ENCODE measurements at regions of chr5 and their contacts with region 1.

Region 1: GRCh38 chr5:175534070-175534932 is 55.9 kb downstream of the SFXN1 start:
- DNase-seq: peak; percentile 94
- ATAC-seq: peak; percentile 95
- H3K4me3 Mint-ChIP-seq: peak overlapping the region; percentile 60
- H3K27ac Mint-ChIP-seq: peak overlapping the region; percentile 83
- H3K4me1 Mint-ChIP-seq: peaks cover 46% of the 10 kb centered on the region
- H3K27me3 Mint-ChIP-seq: no peaks in the 10 kb centered on the region

Region 2: DNA sequence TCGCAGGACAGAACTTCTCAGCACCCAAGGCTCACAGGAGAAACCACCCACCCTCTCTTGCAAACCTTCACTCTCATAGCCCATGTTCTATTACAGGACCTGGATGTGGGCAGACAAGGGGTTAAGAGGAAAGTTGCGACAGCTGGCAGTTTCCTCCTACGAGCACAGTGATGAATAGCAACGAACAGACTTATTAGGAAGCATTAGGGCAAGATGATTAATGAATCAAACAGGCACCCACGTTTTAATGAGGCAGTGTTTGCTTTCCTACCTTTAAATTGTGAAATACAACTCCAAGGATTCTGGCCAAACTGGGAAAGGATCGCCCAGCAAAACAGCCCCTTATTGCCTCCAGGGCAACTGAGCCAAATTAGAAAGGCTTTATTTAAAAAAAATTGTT is 429.6 kb before region 1 on chr5:
- CTCF ChIA-PET with region 1: no interaction called
- POLR2A ChIA-PET with region 1: no interaction called
- intact Hi-C with region 1: no loop called
- DNase-seq: no peak
- ATAC-seq: no peak
- H3K4me3 Mint-ChIP-seq: no peak overlapping the region
- H3K27ac Mint-ChIP-seq: no peak overlapping the region
- H3K4me1 Mint-ChIP-seq: no peaks in the 10 kb centered on the region
- H3K27me3 Mint-ChIP-seq: peaks cover 19% of the 10 kb centered on the region

Region 3: DNA sequence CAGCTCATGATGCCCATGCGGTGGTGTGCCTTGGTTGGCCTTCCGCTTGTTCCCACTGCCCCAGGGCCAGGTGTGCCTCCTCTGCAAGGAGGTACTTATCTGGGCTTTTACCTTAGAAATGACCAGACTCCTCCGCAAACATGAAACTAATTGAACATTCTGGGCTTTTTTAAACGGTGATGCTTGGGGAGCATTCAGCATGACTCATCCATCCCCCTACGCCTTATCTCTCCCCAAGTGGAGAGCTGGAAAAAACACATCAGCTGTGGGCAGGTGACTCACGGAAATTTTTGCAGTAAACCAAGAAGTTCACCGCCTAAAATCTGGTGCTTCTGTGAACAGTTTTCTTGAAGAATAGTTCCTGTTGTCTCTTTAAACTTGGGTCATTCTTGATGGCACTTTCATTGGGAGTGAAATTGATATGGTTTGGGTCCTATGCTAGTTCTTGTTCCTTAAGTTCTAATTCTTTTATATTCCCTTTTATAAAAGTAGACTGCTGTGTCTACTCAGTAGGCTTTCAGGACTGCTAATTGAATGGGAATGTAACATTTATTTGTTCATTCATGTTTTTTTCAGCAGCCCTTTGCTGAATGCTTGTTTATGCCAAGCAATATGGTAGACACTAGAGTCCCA is 16.4 kb before region 1 on chr5:
- CTCF ChIA-PET with region 1: interaction called, 48 read pairs
- POLR2A ChIA-PET with region 1: interaction called, 14 read pairs
- intact Hi-C with region 1: no loop called
- DNase-seq: peak; percentile 92
- ATAC-seq: peak; percentile 55
- H3K4me3 Mint-ChIP-seq: peak overlapping the region; percentile 54
- H3K27ac Mint-ChIP-seq: peak overlapping the region; percentile 98
- H3K4me1 Mint-ChIP-seq: peaks cover 95% of the 10 kb centered on the region
- H3K27me3 Mint-ChIP-seq: no peaks in the 10 kb centered on the region

Region 4: DNA sequence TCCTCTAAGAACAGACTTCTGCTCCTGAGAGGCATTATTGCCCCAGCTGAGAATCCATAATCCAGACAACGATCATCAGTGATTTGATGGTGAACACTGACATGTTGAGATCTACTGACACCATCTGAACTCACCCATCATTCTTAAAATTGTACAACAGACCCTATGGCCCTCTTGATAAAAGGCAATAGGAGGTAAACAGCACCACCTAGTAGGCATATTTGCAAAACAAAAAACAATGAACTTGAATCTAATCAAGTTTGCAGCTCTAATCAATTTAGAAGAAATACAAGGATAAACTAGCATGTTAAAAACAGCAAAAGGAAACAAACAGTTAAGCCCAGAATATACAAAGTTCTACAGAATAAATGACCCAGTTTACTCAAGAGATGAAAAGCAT is 33.7 kb after region 1 on chr5:
- CTCF ChIA-PET with region 1: interaction called, 10 read pairs
- POLR2A ChIA-PET with region 1: no interaction called
- intact Hi-C with region 1: loop called (anchors 1 to 5 kb)
- DNase-seq: no peak
- ATAC-seq: no peak
- H3K4me3 Mint-ChIP-seq: no peak overlapping the region
- H3K27ac Mint-ChIP-seq: no peak overlapping the region
- H3K4me1 Mint-ChIP-seq: peaks cover 11% of the 10 kb centered on the region
- H3K27me3 Mint-ChIP-seq: no peaks in the 10 kb centered on the region

Region 5: DNA sequence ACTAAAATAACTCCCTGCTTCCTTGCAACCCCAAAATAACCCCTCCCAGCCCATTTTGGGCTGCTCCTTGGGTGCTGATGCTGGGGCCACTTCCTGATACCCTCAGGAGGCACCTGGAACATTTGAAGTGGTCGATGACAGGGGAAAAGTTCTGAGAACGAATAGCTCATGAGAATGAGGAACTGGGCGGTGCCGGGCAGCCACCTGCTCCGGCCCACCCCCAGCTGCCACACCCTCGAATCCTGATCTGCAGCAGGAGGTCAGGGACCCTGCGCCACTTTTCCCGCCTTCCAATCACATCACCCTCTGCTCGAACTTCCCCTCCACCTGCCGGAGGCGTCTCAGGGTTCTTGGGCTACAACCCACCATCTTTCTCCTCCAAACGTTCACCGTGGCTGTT is 143.3 kb after region 1 on chr5:
- CTCF ChIA-PET with region 1: interaction called, 13 read pairs
- POLR2A ChIA-PET with region 1: no interaction called
- intact Hi-C with region 1: no loop called
- DNase-seq: no peak
- ATAC-seq: no peak
- H3K4me3 Mint-ChIP-seq: no peak overlapping the region
- H3K27ac Mint-ChIP-seq: peak overlapping the region; percentile 42
- H3K4me1 Mint-ChIP-seq: peaks cover 48% of the 10 kb centered on the region
- H3K27me3 Mint-ChIP-seq: no peaks in the 10 kb centered on the region

Region 6: DNA sequence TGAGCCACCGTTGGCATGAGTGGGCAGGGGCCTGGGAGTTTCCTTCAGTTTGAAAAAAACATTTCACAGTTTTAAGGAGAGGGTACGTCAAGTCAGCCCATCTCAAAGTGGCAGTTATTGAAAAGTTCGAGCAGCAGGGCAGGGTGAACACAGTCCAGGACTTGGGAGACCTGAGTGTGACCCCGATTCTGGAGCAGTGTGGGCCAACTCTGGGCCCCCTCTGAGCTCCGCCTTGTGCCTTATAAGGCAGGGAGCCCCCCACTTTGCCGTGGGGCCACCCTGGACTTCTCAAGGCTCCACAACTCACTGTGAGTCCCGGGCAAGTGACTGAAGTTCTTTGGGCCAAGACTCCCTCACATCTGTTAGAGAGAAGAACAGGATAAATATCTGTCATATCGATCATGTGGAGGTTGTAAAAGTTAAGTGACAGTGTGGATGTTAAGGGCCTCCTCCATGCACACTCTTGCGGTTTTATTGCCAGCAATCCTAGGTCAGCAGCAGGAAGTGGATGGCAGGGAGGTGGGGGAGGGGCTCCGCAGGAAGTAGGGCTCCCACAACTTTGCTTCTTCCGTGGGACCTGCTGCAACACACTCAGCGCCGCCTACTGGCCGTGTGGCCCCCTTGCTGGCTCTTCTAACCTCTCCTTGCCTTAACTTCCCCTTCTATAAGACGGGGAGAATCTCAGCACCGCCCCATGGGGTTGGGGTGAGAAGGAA is 162.0 kb after region 1 on chr5:
- CTCF ChIA-PET with region 1: interaction called, 100 read pairs
- POLR2A ChIA-PET with region 1: no interaction called
- intact Hi-C with region 1: loop called (anchors 1 kb)
- DNase-seq: peak; percentile 94
- ATAC-seq: peak; percentile 90
- H3K4me3 Mint-ChIP-seq: peak overlapping the region; percentile 43
- H3K27ac Mint-ChIP-seq: peak overlapping the region; percentile 91
- H3K4me1 Mint-ChIP-seq: peaks cover 24% of the 10 kb centered on the region
- H3K27me3 Mint-ChIP-seq: no peaks in the 10 kb centered on the region

Region 7: DNA sequence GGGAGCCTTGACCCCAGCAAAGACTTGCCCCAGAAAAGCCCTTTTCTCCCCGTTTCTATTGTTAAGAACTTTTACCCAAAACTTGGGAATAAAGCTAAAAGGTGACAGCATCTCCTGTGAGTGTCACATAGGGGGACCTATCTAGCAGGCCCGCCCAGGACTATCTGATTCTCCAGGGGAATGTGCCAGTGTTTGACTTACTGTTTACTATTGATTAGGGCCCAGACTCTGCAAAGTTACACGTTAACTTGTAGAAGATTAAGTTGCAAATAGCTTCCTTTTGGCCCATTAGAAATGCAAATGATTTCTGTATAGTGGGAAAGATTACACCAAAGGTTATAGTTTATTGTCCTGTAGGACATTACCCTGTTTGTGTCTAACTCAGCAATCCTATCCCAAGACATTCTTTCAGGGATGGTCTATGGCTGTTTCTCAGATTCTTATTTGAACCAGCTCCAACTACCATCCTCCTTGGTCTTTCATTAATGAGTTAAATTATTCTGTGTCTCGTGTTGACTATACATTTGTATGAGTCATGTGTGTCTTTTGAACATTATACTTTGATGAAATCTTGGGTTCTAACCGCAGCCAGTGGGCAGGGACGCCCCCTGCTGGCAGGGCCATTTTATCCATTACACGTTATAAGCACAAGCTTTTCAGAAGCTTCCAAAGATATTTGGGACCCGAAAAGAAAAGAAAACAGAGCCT is 184.3 kb after region 1 on chr5:
- CTCF ChIA-PET with region 1: interaction called, 70 read pairs
- POLR2A ChIA-PET with region 1: no interaction called
- intact Hi-C with region 1: loop called (anchors 2 kb)
- DNase-seq: peak; percentile 88
- ATAC-seq: peak; percentile 91
- H3K4me3 Mint-ChIP-seq: no peak overlapping the region
- H3K27ac Mint-ChIP-seq: no peak overlapping the region
- H3K4me1 Mint-ChIP-seq: peaks cover 6% of the 10 kb centered on the region
- H3K27me3 Mint-ChIP-seq: no peaks in the 10 kb centered on the region

Region 8: DNA sequence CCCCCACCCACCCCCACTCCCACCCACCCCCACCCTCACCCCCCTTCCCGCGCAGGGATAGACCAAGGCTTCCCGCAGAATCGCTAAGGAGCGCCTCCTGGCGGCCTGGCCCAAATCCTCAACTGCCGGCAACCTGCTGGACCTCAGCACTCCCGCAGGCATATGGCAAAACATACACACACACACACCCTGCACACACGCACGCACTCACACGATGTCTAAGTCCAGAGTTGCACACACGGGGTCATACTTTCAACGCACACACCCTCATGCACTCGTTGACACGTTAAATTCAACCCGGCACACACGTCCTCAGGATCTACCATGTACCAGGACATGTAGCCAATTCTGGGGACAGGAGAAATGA is 338.8 kb after region 1 on chr5:
- CTCF ChIA-PET with region 1: interaction called, 3 read pairs
- POLR2A ChIA-PET with region 1: no interaction called
- intact Hi-C with region 1: loop called in 1 of 2 experiments (anchors 10 kb)
- DNase-seq: peak; percentile 55
- ATAC-seq: no peak
- H3K4me3 Mint-ChIP-seq: no peak overlapping the region
- H3K27ac Mint-ChIP-seq: no peak overlapping the region
- H3K4me1 Mint-ChIP-seq: peaks cover 4% of the 10 kb centered on the region
- H3K27me3 Mint-ChIP-seq: peaks cover 53% of the 10 kb centered on the region

Region 9: GRCh38 chr5:176474510-176474909 is 940.2 kb after region 1 on chr5:
- CTCF ChIA-PET with region 1: no interaction called
- POLR2A ChIA-PET with region 1: no interaction called
- intact Hi-C with region 1: no loop called
- DNase-seq: no peak
- ATAC-seq: no peak
- H3K4me3 Mint-ChIP-seq: no peak overlapping the region
- H3K27ac Mint-ChIP-seq: no peak overlapping the region
- H3K4me1 Mint-ChIP-seq: peaks cover 11% of the 10 kb centered on the region
- H3K27me3 Mint-ChIP-seq: no peaks in the 10 kb centered on the region

Measured in activated CD4-positive, alpha-beta T cell treated with anti-CD3 and anti-CD28 coated beads for 36 hours (primary cell).